ENCODE measurements at regions of chr19 and their contacts with region 1.

Region 1: DNA sequence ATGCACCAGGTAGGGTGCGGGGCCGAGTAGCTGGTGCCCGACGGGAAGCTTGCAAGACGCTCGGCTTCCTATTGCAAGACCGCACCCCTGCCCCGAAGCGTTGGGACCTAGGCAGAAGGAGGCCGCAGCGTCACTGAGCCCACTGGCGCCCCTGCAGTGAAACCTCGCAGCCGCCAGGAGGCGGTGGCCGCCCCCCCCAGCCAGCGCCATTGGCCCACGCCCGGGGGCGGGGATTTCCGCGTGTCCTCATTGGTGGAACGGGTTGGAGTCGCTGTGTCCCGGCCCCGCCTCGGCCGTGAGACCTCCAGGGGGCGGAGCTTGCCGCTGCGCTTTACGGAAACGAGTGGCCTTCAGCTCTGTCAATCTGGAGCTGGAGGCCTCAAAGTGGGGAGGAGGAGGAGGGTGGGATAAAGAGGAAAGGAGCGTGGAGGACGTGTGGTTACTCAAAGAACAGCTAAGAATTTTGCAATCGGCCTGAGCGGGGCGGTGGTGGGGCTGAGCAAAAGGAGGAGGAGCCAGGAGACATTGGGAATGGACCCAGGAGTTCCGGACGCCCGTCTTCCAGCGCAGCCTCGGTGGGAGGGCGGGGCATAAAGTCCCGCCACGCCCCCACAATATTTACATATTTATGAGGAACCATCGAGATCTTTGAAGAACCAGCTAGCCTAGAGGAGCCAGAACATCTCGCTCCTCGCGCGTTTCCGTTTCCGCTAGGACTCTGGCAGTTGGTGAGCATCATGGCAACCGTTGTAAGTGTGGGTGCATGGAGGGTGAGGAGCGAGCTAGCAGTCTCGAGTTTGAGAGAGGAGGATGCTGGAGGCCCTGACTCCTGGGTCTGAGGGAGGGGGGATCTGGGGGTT is at the starts of genes GYS1 and RUVBL2:
- DNase-seq: peak; percentile 96 to 100 (median 99)
- ATAC-seq: peak; percentile 95
- H3K4me3 ChIP-seq: peak within 1 kb of the TSS; percentile 70
- H3K4me3 Mint-ChIP-seq: peak within 1 kb of the TSS; percentile 95 to 100 (median 96)
- H3K27ac ChIP-seq: peak within 1 kb of the TSS; percentile 80
- H3K27ac Mint-ChIP-seq: peak within 1 kb of the TSS; percentile 89 to 99 (median 97)
- H3K4me1 ChIP-seq: peaks cover 23 to 24% of the 10 kb centered on the region in 2 donors
- H3K4me1 Mint-ChIP-seq: peaks cover 40 to 59% (median 46%) of the 10 kb centered on the region in 7 donors
- H3K27me3 ChIP-seq: no peaks in the 10 kb centered on the region
- H3K27me3 Mint-ChIP-seq: no peaks in the 10 kb centered on the region
- total RNA-seq, gene GYS1: 27.3 to 82.3 (median 50.7) TPM
- total RNA-seq, gene RUVBL2: 23.4 to 94.0 (median 24.1) TPM

Region 2: DNA sequence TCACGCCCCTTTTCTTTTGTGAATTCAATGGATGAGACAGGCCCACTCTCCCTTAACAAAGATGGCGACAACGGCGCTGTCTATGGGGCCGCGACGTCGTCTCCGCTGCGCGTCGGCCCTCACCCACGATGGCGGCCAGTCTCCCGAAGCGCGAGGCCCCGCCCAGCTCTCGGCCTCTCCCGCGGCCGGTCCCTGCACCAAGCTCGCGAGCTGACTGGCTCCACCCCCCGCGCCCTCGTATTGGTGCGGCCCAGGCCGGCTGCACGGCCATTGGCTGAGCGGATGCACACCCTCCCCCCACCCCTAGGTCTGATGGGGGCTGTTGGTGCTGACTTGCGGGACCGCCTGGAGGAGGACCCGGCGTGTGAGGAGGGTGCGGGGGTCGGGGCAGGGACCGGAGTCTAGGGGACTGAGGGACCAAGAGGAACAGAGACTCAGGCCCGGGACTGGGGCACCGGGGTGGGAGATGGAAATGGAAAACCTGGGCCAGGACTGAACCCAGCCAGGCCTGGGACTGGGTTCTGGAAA is 369.3 kb before region 1 on chr19:
- CTCF ChIA-PET with region 1: no interaction called
- POLR2A ChIA-PET with region 1: no interaction called
- intact Hi-C with region 1: no loop called
- DNase-seq: peak; percentile 83 to 97 (median 87)
- ATAC-seq: peak; percentile 86
- H3K4me3 ChIP-seq: peak overlapping the region; percentile 29
- H3K4me3 Mint-ChIP-seq: peak overlapping the region; percentile 76 to 98 (median 88)
- H3K27ac ChIP-seq: peak overlapping the region; percentile 73
- H3K27ac Mint-ChIP-seq: peak overlapping the region; percentile 86 to 99 (median 92)
- H3K4me1 ChIP-seq: peaks cover 14 to 24% of the 10 kb centered on the region in 2 donors
- H3K4me1 Mint-ChIP-seq: peaks cover 31 to 51% (median 44%) of the 10 kb centered on the region in 7 donors
- H3K27me3 ChIP-seq: no peaks in the 10 kb centered on the region
- H3K27me3 Mint-ChIP-seq: no peaks in the 10 kb centered on the region

Region 3: GRCh38 chr19:48637170-48637947 is 356.0 kb before region 1 on chr19 and contains the start of gene DBP:
- CTCF ChIA-PET with region 1: no interaction called
- POLR2A ChIA-PET with region 1: no interaction called
- intact Hi-C with region 1: loop called (anchors 1 to 5 kb)
- DNase-seq: peak; percentile 91 to 100 (median 100)
- ATAC-seq: peak; percentile 83
- H3K4me3 ChIP-seq: peak within 1 kb of the TSS; percentile 89
- H3K4me3 Mint-ChIP-seq: peak within 1 kb of the TSS; percentile 87 to 100 (median 98)
- H3K27ac ChIP-seq: peak within 1 kb of the TSS; percentile 90
- H3K27ac Mint-ChIP-seq: peak within 1 kb of the TSS; percentile 97 to 100 (median 98)
- H3K4me1 ChIP-seq: peaks cover 33 to 38% of the 10 kb centered on the region in 2 donors
- H3K4me1 Mint-ChIP-seq: peaks cover 13 to 46% (median 41%) of the 10 kb centered on the region in 7 donors
- H3K27me3 ChIP-seq: no peaks in the 10 kb centered on the region
- H3K27me3 Mint-ChIP-seq: peaks cover 0 to 8% (median 0%) of the 10 kb centered on the region in 5 donors
- total RNA-seq, gene DBP: 11.9 to 79.9 (median 33.2) TPM

Region 4: GRCh38 chr19:48899781-48900476 is 93.5 kb before region 1 on chr19 and contains the start of gene NUCB1:
- CTCF ChIA-PET with region 1: no interaction called
- POLR2A ChIA-PET with region 1: interaction called, 4 read pairs
- intact Hi-C with region 1: loop called (anchors 1 kb)
- DNase-seq: peak; percentile 92 to 99 (median 98)
- ATAC-seq: peak; percentile 100
- H3K4me3 ChIP-seq: peak within 1 kb of the TSS; percentile 92
- H3K4me3 Mint-ChIP-seq: peak within 1 kb of the TSS; percentile 87 to 100 (median 98)
- H3K27ac ChIP-seq: peak within 1 kb of the TSS; percentile 92
- H3K27ac Mint-ChIP-seq: peak within 1 kb of the TSS; percentile 78 to 100 (median 98)
- H3K4me1 ChIP-seq: peaks cover 11 to 12% of the 10 kb centered on the region in 2 donors
- H3K4me1 Mint-ChIP-seq: peaks cover 14 to 44% (median 32%) of the 10 kb centered on the region in 7 donors
- H3K27me3 ChIP-seq: peaks cover 2 to 4% of the 10 kb centered on the region in 2 donors
- H3K27me3 Mint-ChIP-seq: peaks cover under 1 to 11% (median 2%) of the 10 kb centered on the region in 5 donors
- total RNA-seq, gene NUCB1: 128 to 252 (median 142) TPM

Region 5: GRCh38 chr19:48926909-48927308 is 66.5 kb before region 1 on chr19:
- CTCF ChIA-PET with region 1: no interaction called
- POLR2A ChIA-PET with region 1: no interaction called
- intact Hi-C with region 1: no loop called
- DNase-seq: peak in 6 of 9 donors; percentile 20 to 41 (median 34)
- ATAC-seq: peak; percentile 45
- H3K4me3 ChIP-seq: peak overlapping the region; percentile 24
- H3K4me3 Mint-ChIP-seq: peak overlapping the region in 9 of 10 donors; percentile 43 to 81 (median 74)
- H3K27ac ChIP-seq: no peak overlapping the region
- H3K27ac Mint-ChIP-seq: peak overlapping the region in 7 of 9 donors; percentile 20 to 69 (median 52)
- H3K4me1 ChIP-seq: no peaks in the 10 kb centered on the region
- H3K4me1 Mint-ChIP-seq: peaks cover 0 to 10% (median 4%) of the 10 kb centered on the region in 7 donors
- H3K27me3 ChIP-seq: no peaks in the 10 kb centered on the region
- H3K27me3 Mint-ChIP-seq: peaks cover 0 to 3% (median 0%) of the 10 kb centered on the region in 5 donors

Region 6: GRCh38 chr19:49056010-49056901 is 62.9 kb after region 1 on chr19:
- CTCF ChIA-PET with region 1: no interaction called
- POLR2A ChIA-PET with region 1: no interaction called
- intact Hi-C with region 1: loop called in 1 of 2 experiments (anchors 10 kb)
- DNase-seq: peak; percentile 33 to 75 (median 45)
- ATAC-seq: peak; percentile 86
- H3K4me3 ChIP-seq: peak overlapping the region; percentile 62
- H3K4me3 Mint-ChIP-seq: peak overlapping the region; percentile 67 to 99 (median 87)
- H3K27ac ChIP-seq: peak overlapping the region; percentile 45
- H3K27ac Mint-ChIP-seq: peak overlapping the region in 2 of 9 donors; percentile 32 to 36
- H3K4me1 ChIP-seq: peaks cover 11 to 14% of the 10 kb centered on the region in 2 donors
- H3K4me1 Mint-ChIP-seq: peaks cover 16 to 19% (median 17%) of the 10 kb centered on the region in 7 donors
- H3K27me3 ChIP-seq: peaks cover 0 to 10% of the 10 kb centered on the region in 2 donors
- H3K27me3 Mint-ChIP-seq: peaks cover 16 to 59% (median 30%) of the 10 kb centered on the region in 5 donors

Region 7: GRCh38 chr19:49210108-49210900 is 216.9 kb after region 1 on chr19:
- CTCF ChIA-PET with region 1: no interaction called
- POLR2A ChIA-PET with region 1: no interaction called
- intact Hi-C with region 1: loop called in 1 of 2 experiments (anchors 2 kb)
- DNase-seq: peak in 8 of 9 donors; percentile 20 to 54 (median 30)
- ATAC-seq: peak; percentile 73
- H3K4me3 ChIP-seq: no peak overlapping the region
- H3K4me3 Mint-ChIP-seq: peak overlapping the region in 4 of 10 donors; percentile 29 to 69 (median 55)
- H3K27ac ChIP-seq: no peak overlapping the region
- H3K27ac Mint-ChIP-seq: peak overlapping the region in 2 of 9 donors; percentile 33 to 48
- H3K4me1 ChIP-seq: no peaks in the 10 kb centered on the region
- H3K4me1 Mint-ChIP-seq: peaks cover 0 to 14% (median 7%) of the 10 kb centered on the region in 7 donors
- H3K27me3 ChIP-seq: no peaks in the 10 kb centered on the region
- H3K27me3 Mint-ChIP-seq: peaks cover 0 to 2% (median 0%) of the 10 kb centered on the region in 5 donors

Region 8: GRCh38 chr19:49640113-49640898 is 646.9 kb after region 1 on chr19 and contains the start of gene RRAS:
- CTCF ChIA-PET with region 1: no interaction called
- POLR2A ChIA-PET with region 1: no interaction called
- intact Hi-C with region 1: loop called (anchors 1 kb)
- DNase-seq: peak; percentile 91 to 100 (median 99)
- ATAC-seq: peak; percentile 78
- H3K4me3 ChIP-seq: peak within 1 kb of the TSS; percentile 64
- H3K4me3 Mint-ChIP-seq: peak within 1 kb of the TSS; percentile 86 to 98 (median 93)
- H3K27ac ChIP-seq: peak within 1 kb of the TSS; percentile 95
- H3K27ac Mint-ChIP-seq: peak within 1 kb of the TSS; percentile 93 to 99 (median 99)
- H3K4me1 ChIP-seq: peaks cover 27 to 40% of the 10 kb centered on the region in 2 donors
- H3K4me1 Mint-ChIP-seq: peaks cover 57 to 67% (median 63%) of the 10 kb centered on the region in 7 donors
- H3K27me3 ChIP-seq: no peaks in the 10 kb centered on the region
- H3K27me3 Mint-ChIP-seq: peaks cover 0 to 6% (median 0%) of the 10 kb centered on the region in 5 donors
- total RNA-seq, gene RRAS: 11.0 to 18.6 (median 13.8) TPM